Vagina (tissue), 2 donors: ENCODE measurements at regions of chr1 and their contacts with region 1.

Region 1: DNA sequence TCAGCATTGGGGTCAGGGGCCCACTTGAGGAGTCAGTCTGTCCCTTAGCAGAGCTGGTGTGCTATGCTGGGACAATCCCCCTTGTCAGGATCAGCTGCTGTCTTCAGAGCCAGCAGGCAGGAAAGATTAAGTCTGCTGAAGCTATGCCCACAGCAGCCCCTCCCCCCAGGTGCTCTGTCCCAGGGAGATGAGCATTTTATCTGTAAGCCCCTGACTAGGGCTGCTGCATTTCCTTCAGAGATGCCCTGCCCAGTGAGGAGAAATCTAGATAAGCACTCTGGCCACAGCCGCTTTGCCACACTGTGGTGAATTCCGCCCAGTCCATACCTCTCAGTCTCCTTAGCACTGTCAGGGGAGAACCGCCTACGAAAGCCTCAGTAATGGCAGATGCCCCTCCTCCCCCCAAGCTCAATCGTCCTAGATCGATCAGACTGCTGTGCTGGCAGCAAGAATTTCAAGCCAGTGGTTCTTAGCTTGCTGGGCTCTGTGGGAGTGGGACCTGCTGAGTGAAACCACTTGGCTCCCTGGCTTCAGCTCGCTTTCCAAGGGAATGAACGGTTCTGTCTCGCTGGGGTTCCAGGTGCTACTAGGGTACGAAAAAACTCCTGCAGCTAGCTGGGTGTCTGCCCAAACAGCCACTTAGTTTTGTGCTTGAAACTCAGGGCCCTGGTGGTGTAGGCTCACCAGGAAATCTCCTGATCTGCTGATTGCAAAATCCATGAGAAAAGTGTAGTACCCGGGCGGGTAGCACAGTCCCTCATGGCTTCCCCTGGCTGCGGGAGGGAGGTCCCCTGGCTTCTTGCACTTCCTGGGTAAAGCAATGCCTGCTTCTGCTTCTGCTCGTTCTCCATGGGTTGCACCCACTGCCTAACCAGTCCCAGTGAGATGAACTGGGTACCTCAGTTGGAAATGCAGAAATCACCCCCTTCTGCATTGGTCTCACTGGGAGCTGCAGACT is 25.1 kb upstream of the TP53BP2 start:
- DNase-seq: no peak
- H3K4me3 ChIP-seq: no peak overlapping the region
- H3K27ac ChIP-seq: no peak overlapping the region
- H3K4me1 ChIP-seq: no peaks in the 10 kb centered on the region
- H3K27me3 ChIP-seq: no peaks in the 10 kb centered on the region
- CTCF ChIP-seq: no peak
- POLR2A ChIP-seq: no peak

Region 2: DNA sequence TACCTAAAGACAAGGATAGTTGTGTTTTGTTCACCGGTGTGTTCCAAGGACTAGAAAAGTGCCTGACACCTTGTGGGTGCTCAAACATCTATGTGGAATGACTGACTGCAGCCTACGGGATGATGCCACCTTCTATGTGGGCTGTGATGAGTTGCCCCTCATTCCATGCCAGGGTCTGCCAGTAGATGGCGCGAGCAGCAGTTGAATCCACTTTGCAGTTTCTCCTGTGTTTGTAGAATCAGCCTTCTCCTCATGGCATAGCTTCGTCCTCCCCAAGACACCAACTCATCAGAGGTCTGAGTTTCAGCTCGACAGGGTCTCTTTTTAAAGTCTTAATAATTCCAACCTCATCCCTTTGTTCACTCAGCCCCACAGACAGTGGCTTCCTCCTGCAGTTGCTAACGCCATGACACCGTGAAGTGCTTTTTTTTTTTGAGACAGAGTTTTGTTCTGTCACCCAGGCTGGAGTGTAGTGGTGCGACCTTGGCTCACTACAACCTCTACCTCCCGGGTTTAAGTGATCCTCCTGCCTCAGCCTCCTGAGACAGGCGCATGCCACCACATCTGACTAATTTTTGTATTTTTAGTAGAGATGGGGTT is 339.1 kb before region 1 on chr1:
- intact Hi-C with region 1: loop called (anchors 5 kb)
- DNase-seq: no peak
- H3K4me3 ChIP-seq: no peak overlapping the region
- H3K27ac ChIP-seq: no peak overlapping the region
- H3K4me1 ChIP-seq: no peaks in the 10 kb centered on the region
- H3K27me3 ChIP-seq: no peaks in the 10 kb centered on the region
- CTCF ChIP-seq: no peak
- POLR2A ChIP-seq: no peak